GM12878 (cell line): ENCODE measurements at regions of chr12 and their contacts with region 1.

Region 1: GRCh38 chr12:10153271-10154144 is 18.4 kb downstream of the OLR1 start:
- DNase-seq: no peak
- ATAC-seq: peak; percentile 84
- H3K4me3 ChIP-seq: peak overlapping the region; percentile 67
- H3K27ac ChIP-seq: 0 out of 2 replicates have a peak overlapping the region, but pooled peaks have one; percentile 6
- H3K4me1 ChIP-seq: 0 out of 2 replicates have a peak, but pooled peaks cover 4% of the 10 kb centered on the region
- H3K27me3 ChIP-seq: peaks cover 0 to 5% of the 10 kb centered on the region in 2 experiments; a peak in 2 of 4 replicates
- CTCF ChIP-seq: peak; percentile 71 to 80 (median 76)
- EP300 ChIP-seq: no peak
- POLR2A ChIP-seq: no peak
- RAD21 ChIP-seq: peak; percentile 70

Region 2: DNA sequence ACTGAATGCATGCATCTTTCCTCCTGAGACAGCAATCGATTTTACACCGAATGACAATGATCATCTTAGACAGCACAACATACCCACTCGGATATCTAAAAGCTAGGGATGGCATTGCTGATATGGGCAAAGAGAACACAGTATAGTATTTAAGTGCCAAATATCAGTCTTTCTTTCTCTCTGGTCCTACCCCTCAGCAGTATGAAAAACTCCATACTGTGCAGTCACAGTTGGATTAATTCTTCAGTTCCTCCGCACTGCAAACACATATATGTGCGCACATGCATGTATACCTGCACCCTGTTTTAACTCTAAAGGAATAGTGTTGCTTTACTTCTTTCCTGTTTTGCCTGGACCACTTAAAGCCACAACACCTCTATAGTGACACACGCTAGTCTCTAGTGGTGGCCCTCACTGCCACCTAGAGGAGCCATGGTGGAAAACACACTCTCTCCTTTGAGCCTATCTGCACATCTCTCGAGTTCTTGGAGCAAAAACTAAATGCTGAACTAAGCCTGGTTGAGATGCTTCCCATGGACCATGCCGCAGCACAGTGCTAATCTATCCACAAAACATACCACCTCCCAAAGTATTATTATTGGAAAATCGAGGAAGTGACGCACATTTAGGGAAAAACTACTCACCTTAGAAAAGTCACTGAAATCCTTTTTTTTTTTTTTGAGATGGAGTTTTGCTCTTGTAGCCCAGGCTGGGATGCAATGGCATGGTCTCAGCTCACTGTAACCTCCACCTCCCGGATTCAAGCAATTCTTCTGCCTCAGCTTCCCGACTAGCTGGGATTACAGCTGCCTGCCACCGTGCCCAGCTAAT is 37.3 kb after region 1 on chr12:
- CTCF ChIA-PET with region 1: interaction called, 34 read pairs
- POLR2A ChIA-PET with region 1: no interaction called
- RAD21 ChIA-PET with region 1: interaction called, 7 read pairs
- SMC1A ChIA-PET with region 1: interaction called, 10 read pairs
- in situ Hi-C with region 1: no loop called
- intact Hi-C with region 1: loop called (anchors 2 kb)
- DNase-seq: no peak
- ATAC-seq: peak; percentile 99
- H3K4me3 ChIP-seq: no peak overlapping the region
- H3K27ac ChIP-seq: no peak overlapping the region
- H3K4me1 ChIP-seq: peaks cover 1% of the 10 kb centered on the region
- H3K27me3 ChIP-seq: no peaks in the 10 kb centered on the region; a peak in 2 of 4 replicates
- CTCF ChIP-seq: peak; percentile 78 to 93 (median 87)
- EP300 ChIP-seq: no peak
- POLR2A ChIP-seq: no peak
- RAD21 ChIP-seq: peak; percentile 88

Region 3: GRCh38 chr12:10562306-10562933 is 408.9 kb after region 1 on chr12:
- CTCF ChIA-PET with region 1: interaction called, 13 read pairs
- POLR2A ChIA-PET with region 1: no interaction called
- RAD21 ChIA-PET with region 1: no interaction called
- SMC1A ChIA-PET with region 1: interaction called, 6 read pairs
- in situ Hi-C with region 1: no loop called
- intact Hi-C with region 1: loop called (anchors 1 kb)
- DNase-seq: no peak
- ATAC-seq: peak; percentile 39; the same call in 2 of the 3 replicates
- H3K4me3 ChIP-seq: no peak overlapping the region
- H3K27ac ChIP-seq: no peak overlapping the region
- H3K4me1 ChIP-seq: peaks cover 4% of the 10 kb centered on the region
- H3K27me3 ChIP-seq: no peaks in the 10 kb centered on the region
- CTCF ChIP-seq: peak; percentile 45 to 69 (median 56); a peak in 5 of 6 replicates
- EP300 ChIP-seq: no peak
- POLR2A ChIP-seq: no peak
- RAD21 ChIP-seq: peak; percentile 96

Region 4: GRCh38 chr12:10673660-10674384 is 520.3 kb after region 1 on chr12 and contains the start of gene STYK1:
- CTCF ChIA-PET with region 1: no interaction called
- POLR2A ChIA-PET with region 1: no interaction called
- RAD21 ChIA-PET with region 1: no interaction called
- SMC1A ChIA-PET with region 1: no interaction called
- in situ Hi-C with region 1: no loop called
- intact Hi-C with region 1: loop called (anchors 5 kb)
- DNase-seq: peak; percentile 24
- ATAC-seq: peak; percentile 84
- H3K4me3 ChIP-seq: peak within 1 kb of the TSS; percentile 32
- H3K27ac ChIP-seq: no peak within 1 kb of the TSS
- H3K4me1 ChIP-seq: peaks cover 14% of the 10 kb centered on the region; the same call in 1 of the 2 replicates
- H3K27me3 ChIP-seq: peaks cover 0 to 2% of the 10 kb centered on the region in 2 experiments; a peak in 1 of 4 replicates
- CTCF ChIP-seq: peak; percentile 81 to 87 (median 83)
- EP300 ChIP-seq: no peak
- POLR2A ChIP-seq: no peak
- RAD21 ChIP-seq: peak; percentile 83
- polyA plus RNA-seq, gene STYK1: 0.73 to 0.87 TPM